A549 (cell line): ENCODE measurements at regions of chr14 and their contacts with region 1.

Region 1: DNA sequence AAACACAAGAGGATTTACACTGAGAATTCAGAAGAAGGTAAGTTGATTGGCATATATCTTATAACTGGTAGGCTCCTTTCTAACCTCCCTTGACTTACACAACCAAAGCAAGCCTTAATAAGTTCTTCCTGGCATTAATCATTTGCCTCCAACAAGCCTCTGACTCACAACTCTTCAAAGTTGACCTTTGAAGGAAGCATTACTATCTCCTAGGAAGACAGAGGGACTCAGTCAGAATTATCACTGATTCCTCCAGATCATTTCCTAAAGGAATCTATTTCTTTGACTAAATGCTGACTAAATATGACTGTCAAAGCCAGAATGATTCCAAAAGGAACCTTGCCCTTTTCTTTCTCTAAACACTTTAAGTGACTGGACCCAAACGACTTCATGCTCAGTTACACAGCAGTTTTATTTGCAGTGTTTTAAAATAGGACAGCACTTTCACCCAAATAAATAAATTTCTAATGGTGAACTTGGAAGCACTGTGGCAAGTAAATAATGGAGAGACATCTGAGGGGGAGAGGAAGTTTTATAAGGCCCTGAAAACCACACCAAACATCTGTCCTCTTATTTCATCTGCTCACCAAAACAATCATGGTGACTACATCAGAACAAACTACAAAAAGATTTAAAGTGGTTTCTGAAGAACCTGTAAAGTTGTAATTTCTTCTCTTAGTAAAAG is 128.2 kb downstream of the KLHL28 start:
- DNase-seq: peak; percentile 3 to 41
- ATAC-seq: peak; percentile 79 to 85; a peak in 5 of 6 replicates
- H3K4me3 ChIP-seq: no peak overlapping the region
- H3K27ac ChIP-seq: peak overlapping the region in 1 of 2 experiments; percentile 55; a peak in 4 of 6 replicates
- H3K4me1 ChIP-seq: peaks cover 22% of the 10 kb centered on the region
- CTCF ChIP-seq: no peak
- EP300 ChIP-seq: no peak
- POLR2A ChIP-seq: no peak
- RAD21 ChIP-seq: no peak

Region 2: DNA sequence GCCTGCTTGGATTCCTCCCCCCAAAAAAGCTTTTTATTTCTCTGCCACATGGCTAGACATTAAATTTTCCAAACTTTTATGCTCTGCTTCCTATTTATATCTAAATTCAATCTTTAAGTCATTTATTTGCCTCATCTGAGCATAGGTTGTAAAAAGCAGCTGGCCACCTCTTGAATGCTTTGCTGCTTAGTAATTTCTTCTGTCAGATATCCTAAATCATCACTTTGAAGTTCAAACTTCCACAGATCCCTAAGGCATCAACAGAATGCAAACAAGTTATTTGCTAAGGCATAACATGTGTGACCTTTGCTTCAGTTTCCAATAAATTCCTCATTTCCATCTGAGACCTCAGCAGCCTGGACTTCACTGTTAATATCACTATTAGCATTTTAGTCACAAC is 536.1 kb before region 1 on chr14:
- CTCF ChIA-PET with region 1: no interaction called
- POLR2A ChIA-PET with region 1: no interaction called
- DNase-seq: no peak
- ATAC-seq: no peak
- H3K4me3 ChIP-seq: no peak overlapping the region
- H3K27ac ChIP-seq: no peak overlapping the region
- H3K4me1 ChIP-seq: no peaks in the 10 kb centered on the region
- CTCF ChIP-seq: no peak
- EP300 ChIP-seq: no peak
- POLR2A ChIP-seq: no peak
- RAD21 ChIP-seq: no peak

Region 3: DNA sequence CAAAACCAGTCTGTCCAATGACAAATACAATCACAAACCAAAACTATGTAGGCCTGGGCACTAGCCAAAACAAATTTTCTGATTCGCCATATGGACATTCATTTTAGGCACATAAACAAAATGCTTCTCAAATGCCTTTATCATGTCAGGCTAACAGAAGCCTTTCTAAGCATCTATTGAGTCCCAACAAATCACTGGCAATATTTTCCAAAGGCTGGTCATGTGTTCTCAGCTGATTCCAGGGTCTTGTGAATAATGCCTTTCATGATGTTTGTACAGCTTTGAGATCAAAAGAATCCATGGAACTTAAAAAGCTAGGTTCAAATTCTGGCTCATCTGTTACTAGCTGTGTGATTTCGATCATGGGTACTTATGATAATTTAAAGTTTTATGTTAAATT is 342.6 kb before region 1 on chr14:
- CTCF ChIA-PET with region 1: no interaction called
- POLR2A ChIA-PET with region 1: no interaction called
- DNase-seq: no peak
- ATAC-seq: no peak
- H3K4me3 ChIP-seq: no peak overlapping the region
- H3K27ac ChIP-seq: no peak overlapping the region
- H3K4me1 ChIP-seq: no peaks in the 10 kb centered on the region
- CTCF ChIP-seq: no peak
- EP300 ChIP-seq: no peak
- POLR2A ChIP-seq: no peak
- RAD21 ChIP-seq: no peak

Region 4: DNA sequence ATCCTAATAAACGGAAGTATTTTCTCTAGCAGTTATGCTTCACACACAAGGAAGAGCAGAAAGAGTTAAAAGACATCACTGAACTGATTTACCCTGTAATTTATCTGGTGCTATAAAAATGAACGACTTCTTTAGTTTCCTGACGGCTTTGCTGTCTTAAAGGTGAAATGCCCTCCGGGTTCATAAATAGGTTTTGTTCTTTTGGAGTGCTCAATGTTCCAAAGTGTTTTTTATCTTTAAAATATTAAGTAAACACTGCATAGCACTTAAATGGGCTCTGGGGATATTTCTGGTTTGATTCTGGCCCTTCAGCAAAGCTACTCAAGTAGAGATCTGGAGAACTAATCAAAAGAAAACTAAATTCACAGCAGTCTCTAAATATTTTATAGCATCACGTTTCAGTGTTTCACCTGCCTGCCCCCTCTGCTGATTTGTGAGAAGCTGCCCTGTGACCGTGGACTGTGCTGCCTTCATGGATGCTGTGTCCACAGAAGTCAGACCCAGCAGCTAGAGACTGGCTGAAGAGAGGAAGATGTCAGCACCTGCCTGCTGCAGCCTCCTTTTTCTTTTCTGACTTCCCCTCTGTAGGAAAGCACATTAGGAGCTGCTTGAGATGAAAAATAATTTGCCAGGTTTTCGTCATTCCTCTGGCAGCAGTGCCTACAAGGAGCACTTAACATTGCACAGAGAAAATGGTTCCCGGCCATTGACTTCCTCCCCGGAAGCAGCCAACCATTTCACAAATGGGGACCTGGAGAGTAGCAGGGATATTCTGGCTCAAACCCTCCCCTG is 121.3 kb before region 1 on chr14:
- CTCF ChIA-PET with region 1: no interaction called
- POLR2A ChIA-PET with region 1: no interaction called
- DNase-seq: no peak
- ATAC-seq: no peak
- H3K4me3 ChIP-seq: no peak overlapping the region
- H3K27ac ChIP-seq: no peak overlapping the region
- H3K4me1 ChIP-seq: no peaks in the 10 kb centered on the region
- CTCF ChIP-seq: no peak
- EP300 ChIP-seq: no peak
- POLR2A ChIP-seq: no peak
- RAD21 ChIP-seq: no peak

Region 5: GRCh38 chr14:44756554-44756953 is 77.0 kb before region 1 on chr14:
- CTCF ChIA-PET with region 1: no interaction called
- POLR2A ChIA-PET with region 1: no interaction called
- DNase-seq: no peak
- ATAC-seq: no peak
- H3K4me3 ChIP-seq: no peak overlapping the region
- H3K27ac ChIP-seq: no peak overlapping the region
- H3K4me1 ChIP-seq: no peaks in the 10 kb centered on the region
- CTCF ChIP-seq: no peak
- EP300 ChIP-seq: no peak
- POLR2A ChIP-seq: no peak
- RAD21 ChIP-seq: no peak

Region 6: GRCh38 chr14:44846232-44846824 is 12.8 kb after region 1 on chr14:
- CTCF ChIA-PET with region 1: interaction called, 12 read pairs
- POLR2A ChIA-PET with region 1: interaction called, 3 read pairs
- DNase-seq: peak; percentile 21 to 44
- ATAC-seq: peak in 1 of 2 experiments; percentile 72; a peak in 2 of 6 replicates
- H3K4me3 ChIP-seq: no peak overlapping the region
- H3K27ac ChIP-seq: no peak overlapping the region
- H3K4me1 ChIP-seq: no peaks in the 10 kb centered on the region
- CTCF ChIP-seq: peak; percentile 88
- EP300 ChIP-seq: no peak
- POLR2A ChIP-seq: no peak
- RAD21 ChIP-seq: peak; percentile 85 to 86